Posterior vena cava (tissue), 2 donors: ENCODE measurements at regions of chr7 and their contacts with region 1.

Region 1: DNA sequence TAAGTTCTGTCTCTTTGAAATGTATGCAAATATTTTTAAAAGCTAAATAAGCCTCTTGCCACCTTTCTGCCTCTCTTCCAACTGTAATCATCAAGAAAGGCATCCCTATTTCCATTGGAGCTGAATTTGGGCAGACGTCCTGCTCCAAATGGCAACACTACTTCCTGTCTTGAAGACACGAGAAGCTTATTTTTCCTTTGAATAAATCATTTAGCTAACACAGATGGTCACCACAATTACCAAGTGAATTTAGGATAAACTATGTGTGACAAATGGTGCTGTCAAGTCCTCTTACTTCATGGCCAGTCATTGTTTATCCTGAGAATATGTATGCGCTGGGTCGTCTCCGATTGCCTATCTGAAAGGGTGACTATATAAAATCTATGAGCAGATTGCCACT is 268.0 kb downstream of the ANKRD7 start:
- DNase-seq: no peak

Region 2: GRCh38 chr7:116665332-116665996 is 1827.0 kb before region 1 on chr7:
- intact Hi-C with region 1: no loop called
- DNase-seq: no peak

Region 3: GRCh38 chr7:119175911-119176627 is 683.6 kb after region 1 on chr7:
- intact Hi-C with region 1: loop called in 1 of 2 experiments (anchors 10 kb)
- DNase-seq: no peak